Activated T-helper 1 cell treated with anti-CD3 and anti-CD28 coated beads, Interleukin-12 subunit alpha, Interleukin-12 subunit beta, Interleukin-2, Interleukin-4 antibody, amounts not matched to agents 30 ng/mL and 10 ng/mL and 1 ng/mL, durations not matched to agents 14 hours and 24 hours and 36 hours (primary cell): ENCODE measurements at regions of chr14 and their contacts with region 1.

Region 1: GRCh38 chr14:68210729-68211299 is 391.2 kb downstream of the RAD51B start:
- DNase-seq: peak; percentile 55
- H3K4me3 Mint-ChIP-seq: peak overlapping the region; percentile 66
- H3K27ac Mint-ChIP-seq: peak overlapping the region; percentile 73
- H3K4me1 Mint-ChIP-seq: peaks cover 49% of the 10 kb centered on the region
- H3K27me3 Mint-ChIP-seq: no peaks in the 10 kb centered on the region

Region 2: GRCh38 chr14:67934008-67934481 is 276.8 kb before region 1 on chr14:
- intact Hi-C with region 1: no loop called
- DNase-seq: no peak
- H3K4me3 Mint-ChIP-seq: no peak overlapping the region
- H3K27ac Mint-ChIP-seq: no peak overlapping the region
- H3K4me1 Mint-ChIP-seq: peaks cover 5% of the 10 kb centered on the region
- H3K27me3 Mint-ChIP-seq: no peaks in the 10 kb centered on the region

Region 3: DNA sequence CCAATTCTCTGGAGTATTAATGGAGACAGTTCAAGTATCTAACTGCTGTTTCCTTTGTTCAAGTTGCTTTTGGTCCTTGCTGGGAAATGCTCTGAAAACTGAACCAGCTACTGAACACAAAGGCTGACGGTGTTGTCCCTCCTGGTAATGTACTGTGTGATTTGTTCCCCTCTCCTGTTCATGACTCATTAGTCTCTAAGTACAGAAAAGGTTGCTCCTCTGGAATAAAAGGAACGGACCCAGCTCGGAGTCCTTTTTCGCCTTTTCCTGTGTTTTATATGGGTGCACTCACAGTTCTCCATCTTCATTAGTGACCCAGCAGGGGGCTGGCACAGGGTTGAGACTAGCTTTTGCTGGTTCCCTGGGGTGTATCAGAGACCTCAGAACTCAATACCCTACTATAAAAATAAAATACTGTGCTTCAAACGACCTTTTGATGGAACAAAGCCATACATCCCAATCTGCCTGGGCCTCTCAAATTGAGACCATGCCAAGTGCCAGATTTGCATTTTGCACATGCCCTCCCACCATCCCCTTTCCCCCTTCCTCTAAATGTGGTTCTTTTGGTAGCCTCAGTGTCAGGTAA is 121.6 kb before region 1 on chr14:
- intact Hi-C with region 1: loop called (anchors 5 kb)
- DNase-seq: no peak
- H3K4me3 Mint-ChIP-seq: no peak overlapping the region
- H3K27ac Mint-ChIP-seq: no peak overlapping the region
- H3K4me1 Mint-ChIP-seq: peaks cover 21% of the 10 kb centered on the region
- H3K27me3 Mint-ChIP-seq: no peaks in the 10 kb centered on the region

Region 4: GRCh38 chr14:68181519-68182326 is 29.1 kb before region 1 on chr14:
- intact Hi-C with region 1: loop called (anchors 1 kb)
- DNase-seq: no peak
- H3K4me3 Mint-ChIP-seq: no peak overlapping the region
- H3K27ac Mint-ChIP-seq: no peak overlapping the region
- H3K4me1 Mint-ChIP-seq: peaks cover 30% of the 10 kb centered on the region
- H3K27me3 Mint-ChIP-seq: no peaks in the 10 kb centered on the region

Region 5: DNA sequence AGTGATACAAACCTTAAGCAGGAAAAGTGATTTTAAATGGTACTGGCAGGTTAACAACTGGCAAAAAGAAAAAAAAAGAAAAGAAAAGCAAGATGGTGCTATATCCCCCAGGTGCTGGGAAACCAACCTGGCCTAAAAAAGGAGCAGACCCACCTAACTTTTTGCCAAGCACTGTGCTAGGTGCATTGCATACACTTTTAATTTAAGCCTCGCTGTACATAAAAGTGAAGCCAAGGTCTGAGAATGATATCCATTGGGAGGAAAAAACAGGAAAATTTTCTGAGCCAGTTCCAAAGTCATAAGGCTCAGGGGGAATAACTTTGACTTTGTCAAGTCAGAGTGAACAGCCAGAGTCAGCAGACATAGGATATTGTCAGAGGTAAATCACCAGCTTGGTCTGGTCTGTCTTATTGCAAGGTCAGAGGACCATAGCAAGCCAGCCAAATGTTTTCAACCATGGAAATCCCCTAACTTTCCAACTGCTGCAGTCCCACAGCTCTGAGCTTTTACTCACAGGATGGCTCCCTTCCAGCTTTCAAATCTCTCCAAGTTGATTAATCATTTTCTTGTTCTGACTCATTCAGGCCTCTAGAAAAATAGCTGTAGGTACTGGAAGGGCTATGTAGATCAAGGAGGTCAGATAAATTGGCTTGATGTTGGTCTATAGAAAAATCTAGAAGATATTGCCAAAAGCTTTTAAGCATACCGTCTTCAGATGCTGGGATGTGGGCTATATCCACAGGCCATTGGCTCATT is 21.7 kb after region 1 on chr14:
- intact Hi-C with region 1: loop called (anchors 1 kb)
- DNase-seq: peak; percentile 9
- H3K4me3 Mint-ChIP-seq: no peak overlapping the region
- H3K27ac Mint-ChIP-seq: no peak overlapping the region
- H3K4me1 Mint-ChIP-seq: peaks cover 7% of the 10 kb centered on the region
- H3K27me3 Mint-ChIP-seq: no peaks in the 10 kb centered on the region

Region 6: GRCh38 chr14:68685419-68686204 is 474.8 kb after region 1 on chr14:
- intact Hi-C with region 1: loop called (anchors 1 kb)
- DNase-seq: peak; percentile 71
- H3K4me3 Mint-ChIP-seq: peak overlapping the region; percentile 45
- H3K27ac Mint-ChIP-seq: peak overlapping the region; percentile 86
- H3K4me1 Mint-ChIP-seq: peaks cover 61% of the 10 kb centered on the region
- H3K27me3 Mint-ChIP-seq: peaks cover 2% of the 10 kb centered on the region

Region 7: DNA sequence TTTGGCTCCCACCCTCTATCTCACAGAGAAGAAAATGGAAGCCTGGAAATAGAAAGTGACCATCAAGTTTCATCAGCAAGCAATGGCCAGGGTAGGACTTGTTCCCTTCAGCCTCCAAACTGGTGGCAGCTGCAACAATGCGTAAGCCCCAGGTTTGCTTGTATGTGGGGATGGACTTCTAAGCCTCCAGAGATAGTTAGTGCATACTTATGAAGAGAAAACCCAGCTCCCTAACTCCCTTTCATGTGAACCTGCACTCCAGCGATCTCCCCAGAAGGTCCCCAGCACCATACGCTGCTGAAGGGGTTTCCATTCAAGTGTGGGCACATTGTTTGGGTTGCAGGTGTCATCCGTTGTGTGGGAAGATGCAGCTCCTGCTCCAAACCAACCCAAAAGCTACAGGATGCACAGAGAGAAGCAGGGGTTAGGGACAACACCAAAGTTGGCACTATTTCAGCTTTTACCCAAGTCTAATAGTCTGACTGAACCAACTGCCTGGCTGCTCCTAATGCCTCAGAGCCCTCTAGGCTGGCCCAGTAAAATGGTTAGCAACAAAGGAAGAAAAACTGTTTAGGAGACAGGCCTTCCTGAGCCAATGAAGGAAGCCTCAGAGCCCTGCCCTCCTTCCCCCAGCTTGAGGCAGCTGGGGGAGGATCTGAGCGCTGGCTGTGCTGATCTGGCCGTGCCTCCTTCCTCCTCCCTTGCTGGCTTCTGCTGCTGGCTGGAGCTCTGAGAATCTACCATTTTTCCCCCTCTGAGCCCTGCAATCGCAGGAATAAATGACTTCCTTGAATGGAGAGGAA is 569.7 kb after region 1 on chr14:
- intact Hi-C with region 1: loop called (anchors 1 kb)
- DNase-seq: no peak
- H3K4me3 Mint-ChIP-seq: peak overlapping the region; percentile 78
- H3K27ac Mint-ChIP-seq: peak overlapping the region; percentile 93
- H3K4me1 Mint-ChIP-seq: peaks cover 72% of the 10 kb centered on the region
- H3K27me3 Mint-ChIP-seq: no peaks in the 10 kb centered on the region

Region 8: DNA sequence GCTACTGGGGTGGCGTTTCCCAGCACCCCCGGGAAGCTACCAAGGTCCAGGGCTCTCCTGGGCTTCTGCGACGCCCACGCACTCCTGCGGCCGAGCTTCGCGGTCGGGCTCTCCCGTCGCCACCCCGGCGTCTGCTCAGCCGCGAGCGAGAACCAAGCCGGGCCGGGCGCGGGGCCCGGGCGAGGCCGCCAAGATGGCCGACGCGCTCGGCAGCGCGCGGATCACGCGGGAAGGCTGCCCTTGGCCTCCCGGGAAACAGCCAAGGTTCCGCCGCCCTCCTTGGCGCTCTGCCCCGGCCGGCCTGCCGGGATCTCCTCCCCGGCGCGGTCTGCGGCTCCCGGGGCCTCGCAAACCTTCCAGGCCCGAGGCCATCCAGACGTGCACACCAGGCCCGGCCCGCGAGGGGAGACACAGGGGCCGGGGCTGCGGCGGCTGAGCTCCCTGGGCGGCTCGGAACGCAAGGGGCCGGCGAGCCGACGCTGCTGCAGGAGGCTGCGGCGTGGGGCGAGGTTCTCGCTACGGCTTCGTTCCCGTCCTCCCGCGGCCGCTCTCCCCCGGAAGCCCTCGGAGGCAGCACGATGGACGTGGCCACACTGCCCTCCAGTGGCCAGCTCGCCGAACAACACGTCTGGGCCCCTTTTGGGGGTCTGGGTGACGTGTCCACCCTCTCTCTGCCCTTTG is 605.6 kb after region 1 on chr14:
- intact Hi-C with region 1: loop called (anchors 1 kb)
- DNase-seq: peak; percentile 84
- H3K4me3 Mint-ChIP-seq: peak overlapping the region; percentile 76
- H3K27ac Mint-ChIP-seq: peak overlapping the region; percentile 90
- H3K4me1 Mint-ChIP-seq: peaks cover 58% of the 10 kb centered on the region
- H3K27me3 Mint-ChIP-seq: no peaks in the 10 kb centered on the region